Dendritic cell treated with granulocyte-macrophage colony-stimulating factor and Interleukin-4, amounts not matched to agents 40 ng/mL and 50 ng/mL, for 4 days (primary cell): ENCODE measurements at regions of chr2 and their contacts with region 1.

Region 1: GRCh38 chr2:68385220-68385906 is 20.3 kb downstream of the PLEK start:
- H3K4me3 Mint-ChIP-seq: no peak overlapping the region
- H3K27ac Mint-ChIP-seq: peak overlapping the region; percentile 56
- H3K4me1 Mint-ChIP-seq: peaks cover 92% of the 10 kb centered on the region
- H3K27me3 Mint-ChIP-seq: no peaks in the 10 kb centered on the region

Region 2: DNA sequence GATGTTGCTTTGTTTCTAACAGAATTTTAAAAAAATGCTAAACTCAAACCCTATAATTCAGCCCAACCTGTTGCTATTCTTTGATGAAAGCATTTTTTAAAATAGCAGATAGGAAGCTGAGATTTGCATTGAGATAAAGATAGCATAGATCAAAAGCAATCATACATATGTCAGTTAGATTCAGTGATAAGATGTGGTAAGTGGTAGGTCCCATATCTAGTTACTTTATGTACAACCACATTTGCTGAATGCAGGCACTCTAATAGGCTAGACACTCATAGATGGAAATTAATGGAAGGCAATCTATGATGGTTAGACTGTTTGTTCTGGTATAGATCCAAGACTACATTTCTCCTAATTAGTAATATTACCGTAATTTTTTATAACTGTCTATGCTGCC is 295.4 kb before region 1 on chr2:
- intact Hi-C with region 1: no loop called
- H3K4me3 Mint-ChIP-seq: no peak overlapping the region
- H3K27ac Mint-ChIP-seq: no peak overlapping the region
- H3K4me1 Mint-ChIP-seq: peaks cover 7% of the 10 kb centered on the region
- H3K27me3 Mint-ChIP-seq: no peaks in the 10 kb centered on the region

Region 3: GRCh38 chr2:68362069-68362468 is 23.3 kb before region 1 on chr2:
- intact Hi-C with region 1: loop called (anchors 2 kb)
- H3K4me3 Mint-ChIP-seq: peak overlapping the region; percentile 55
- H3K27ac Mint-ChIP-seq: peak overlapping the region; percentile 99
- H3K4me1 Mint-ChIP-seq: peaks cover 35% of the 10 kb centered on the region
- H3K27me3 Mint-ChIP-seq: no peaks in the 10 kb centered on the region

Region 4: DNA sequence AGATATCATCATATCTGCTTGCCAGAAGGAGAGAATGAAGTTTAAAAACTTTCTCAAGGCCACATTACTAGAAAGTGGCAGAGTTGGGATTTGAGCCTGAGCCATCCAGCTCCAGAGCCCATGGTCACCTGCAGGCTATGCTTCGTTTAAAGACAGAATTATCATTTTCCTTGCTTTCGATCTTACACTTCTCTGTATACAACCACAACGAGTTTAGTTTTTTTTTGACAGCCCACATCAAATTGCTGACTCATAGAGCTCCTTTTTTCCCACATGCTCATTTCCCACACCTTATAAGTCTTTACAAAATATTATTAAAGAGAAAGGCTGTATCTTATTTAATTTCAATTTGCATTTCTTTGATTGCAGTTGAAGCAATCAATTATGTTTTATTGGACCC is 13.8 kb before region 1 on chr2:
- intact Hi-C with region 1: loop called (anchors 2 kb)
- H3K4me3 Mint-ChIP-seq: peak overlapping the region; percentile 4
- H3K27ac Mint-ChIP-seq: no peak overlapping the region
- H3K4me1 Mint-ChIP-seq: peaks cover 70% of the 10 kb centered on the region
- H3K27me3 Mint-ChIP-seq: no peaks in the 10 kb centered on the region

Region 5: GRCh38 chr2:68423966-68424650 is 38.7 kb after region 1 on chr2:
- intact Hi-C with region 1: no loop called
- H3K4me3 Mint-ChIP-seq: no peak overlapping the region
- H3K27ac Mint-ChIP-seq: no peak overlapping the region
- H3K4me1 Mint-ChIP-seq: peaks cover 34% of the 10 kb centered on the region
- H3K27me3 Mint-ChIP-seq: no peaks in the 10 kb centered on the region

Region 6: DNA sequence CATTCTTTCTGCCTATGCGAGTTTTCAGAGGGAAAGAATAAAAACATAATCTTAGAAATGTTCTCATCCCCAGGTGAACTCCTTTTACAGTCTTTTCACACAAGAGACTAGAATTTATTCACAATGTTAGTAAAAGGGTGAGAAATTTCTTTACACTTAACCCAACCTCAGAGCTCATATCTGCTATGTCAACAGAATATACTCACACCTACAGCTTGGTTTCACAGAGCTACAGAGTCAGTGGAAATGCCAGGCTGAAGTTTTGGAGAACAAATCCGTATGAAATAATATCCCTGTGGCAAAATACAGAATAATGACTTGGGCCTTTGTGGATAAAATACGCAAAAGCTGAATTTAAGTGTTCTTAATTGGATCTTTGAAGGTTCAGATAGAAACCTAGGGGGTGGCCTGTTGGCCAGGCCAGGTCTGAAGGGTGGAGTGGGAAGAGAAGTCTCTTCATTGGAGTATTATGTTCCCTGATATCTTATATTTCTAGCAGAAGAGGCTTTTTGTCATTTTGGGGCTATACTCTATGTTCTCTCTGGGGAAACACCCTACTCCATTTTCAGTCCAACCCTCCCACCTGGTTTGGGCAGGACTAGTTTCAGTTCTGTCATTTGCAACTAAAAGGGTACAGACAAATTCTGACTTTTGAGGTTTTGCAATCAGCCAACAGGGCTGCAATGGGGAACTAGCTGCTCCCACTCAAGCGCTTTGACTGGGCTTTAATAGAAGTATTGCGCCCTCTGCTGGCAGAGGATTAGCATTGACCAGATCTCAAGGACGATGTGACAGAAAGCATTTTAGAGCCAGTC is 56.0 kb after region 1 on chr2:
- intact Hi-C with region 1: no loop called
- H3K4me3 Mint-ChIP-seq: peak overlapping the region; percentile 17
- H3K27ac Mint-ChIP-seq: peak overlapping the region; percentile 83
- H3K4me1 Mint-ChIP-seq: peaks cover 45% of the 10 kb centered on the region
- H3K27me3 Mint-ChIP-seq: no peaks in the 10 kb centered on the region

Region 7: GRCh38 chr2:68577183-68577582 is 191.8 kb after region 1 on chr2:
- intact Hi-C with region 1: no loop called
- H3K4me3 Mint-ChIP-seq: no peak overlapping the region
- H3K27ac Mint-ChIP-seq: no peak overlapping the region
- H3K4me1 Mint-ChIP-seq: no peaks in the 10 kb centered on the region
- H3K27me3 Mint-ChIP-seq: no peaks in the 10 kb centered on the region